ENCODE measurements at regions of chr16 and their contacts with region 1.

Region 1: DNA sequence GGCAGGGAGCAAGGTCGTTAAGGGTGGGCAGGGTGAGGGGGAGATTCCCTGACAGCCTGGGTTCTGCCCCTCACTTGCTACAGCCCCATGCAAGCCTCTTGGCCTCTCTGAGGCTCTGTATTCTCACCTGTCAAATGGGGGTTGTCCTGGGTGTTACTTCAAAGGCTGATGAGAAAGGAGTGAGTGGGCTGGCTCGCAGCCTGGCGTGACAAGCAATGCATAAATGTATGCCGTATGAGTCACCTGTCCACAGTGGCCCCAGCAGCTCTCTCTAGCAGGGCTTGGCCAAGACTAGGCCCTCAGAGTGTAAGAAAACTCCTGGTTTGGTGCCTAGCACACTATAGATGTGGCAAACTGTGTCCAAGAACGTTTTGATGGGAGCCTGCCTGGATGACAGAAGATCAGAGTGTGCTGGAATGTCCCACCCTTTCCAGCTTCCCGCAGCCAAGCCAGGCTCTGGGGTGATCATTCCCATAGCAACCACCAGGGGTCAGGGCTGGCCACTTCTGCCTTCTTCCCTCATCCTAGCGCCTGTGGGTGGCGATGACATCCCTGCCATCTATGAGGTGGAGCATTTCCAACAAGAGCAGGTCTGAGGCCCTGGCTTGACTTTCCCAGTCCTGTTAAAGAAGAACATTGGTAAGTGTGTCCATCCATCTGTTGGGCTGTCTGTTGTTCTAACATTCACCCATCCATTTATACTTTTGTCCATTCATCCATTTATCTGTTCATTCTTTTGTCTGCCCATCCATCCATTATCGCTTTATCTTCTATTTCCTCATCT is 37.2 kb upstream of the ADGRG1 start:
- DNase-seq: peak; percentile 21 to 91 (median 78)

Region 2: GRCh38 chr16:57648590-57649442 is 57.5 kb after region 1 on chr16:
- intact Hi-C with region 1: loop called (anchors 5 kb)
- DNase-seq: peak; percentile 58 to 93 (median 84)

Region 3: GRCh38 chr16:57720142-57720575 is 128.9 kb after region 1 on chr16:
- intact Hi-C with region 1: loop called (anchors 10 kb)
- DNase-seq: peak in 40 of 42 donors; percentile 27 to 79 (median 60)

Region 4: DNA sequence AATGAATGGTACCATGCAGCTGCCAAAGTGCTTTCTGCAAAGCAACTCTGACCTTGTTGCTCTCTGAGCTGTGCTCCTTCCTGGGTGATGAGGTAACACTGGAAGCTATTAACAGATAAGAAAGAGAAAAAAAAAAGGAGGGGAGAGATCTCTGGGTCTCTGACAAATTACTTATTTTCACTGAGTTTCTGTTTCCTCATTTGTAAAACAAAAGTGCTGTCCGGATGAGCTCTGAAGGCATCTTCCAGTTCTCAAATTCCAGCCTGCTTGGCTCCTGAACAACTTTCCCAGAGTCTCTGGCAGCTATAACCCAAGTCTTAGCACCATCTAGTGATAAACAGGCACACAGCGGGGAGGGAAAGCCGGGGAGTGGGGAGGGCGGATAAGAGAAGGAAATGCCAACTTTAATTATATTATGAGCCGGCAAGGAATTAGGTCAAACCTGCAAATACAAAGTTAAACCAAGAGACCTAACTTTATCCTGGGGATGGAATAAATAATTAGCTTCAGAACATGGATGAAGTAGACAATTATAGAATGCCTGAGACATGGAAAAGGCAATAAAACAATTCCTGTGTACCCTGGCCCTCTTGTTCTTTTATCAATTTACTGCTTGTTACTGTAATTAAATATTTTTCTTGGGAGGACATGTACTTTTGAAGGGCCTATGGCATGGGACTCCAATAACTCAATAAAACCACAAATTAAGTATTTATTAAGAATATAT is 272.3 kb after region 1 on chr16:
- intact Hi-C with region 1: loop called (anchors 10 kb)
- DNase-seq: peak; percentile 36 to 86 (median 68)

Measured in head of caudate nucleus (tissue), 42 donors.